IMR-90 (cell line): ENCODE measurements at regions of chr5 and their contacts with region 1.

Region 1: DNA sequence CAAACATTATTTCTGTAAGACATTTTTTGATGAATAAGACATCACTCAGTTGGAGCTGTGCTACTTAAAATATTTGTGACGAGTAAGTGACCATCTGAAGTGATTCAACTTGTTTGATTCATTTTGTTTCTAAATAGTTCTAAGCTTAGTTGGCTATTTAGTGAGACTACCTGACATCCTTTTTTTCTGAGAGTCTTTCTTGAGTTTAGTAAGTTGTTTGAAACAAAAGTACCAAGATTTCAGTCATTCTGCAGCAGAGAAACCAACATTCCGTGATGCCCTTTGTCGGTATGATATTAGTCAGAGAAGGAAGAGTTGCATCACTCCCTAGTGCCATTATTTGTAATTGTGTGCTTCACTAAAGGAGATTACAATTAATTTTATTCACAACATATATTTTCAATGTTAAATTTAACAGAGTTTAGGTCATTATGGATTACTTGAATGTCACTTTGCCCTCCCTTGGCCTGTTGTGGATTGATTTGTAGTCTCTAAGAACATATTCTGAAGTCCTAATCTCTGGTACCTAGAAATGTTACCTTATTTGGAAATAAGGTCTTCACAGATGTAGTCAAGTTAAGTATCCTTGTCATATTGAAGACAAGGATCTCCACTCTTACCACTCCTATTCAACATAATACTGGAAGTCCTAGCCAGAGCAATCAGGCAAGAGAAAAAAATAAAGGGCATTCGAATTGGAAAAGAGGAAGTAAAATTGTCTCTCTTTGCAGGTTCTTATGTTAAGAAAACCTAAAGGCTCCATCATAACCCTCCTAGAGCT is 212.2 kb downstream of the PCSK1 start:
- DNase-seq: peak; percentile 77
- ATAC-seq: peak; percentile 61
- H3K4me3 ChIP-seq: no peak overlapping the region
- H3K27ac ChIP-seq: peak overlapping the region; percentile 74
- H3K4me1 ChIP-seq: peaks cover 9% of the 10 kb centered on the region
- H3K27me3 ChIP-seq: no peaks in the 10 kb centered on the region
- CTCF ChIP-seq: no peak
- POLR2A ChIP-seq: no peak; the same call in 1 of the 2 replicates
- RAD21 ChIP-seq: no peak; the same call in 1 of the 2 replicates

Region 2: GRCh38 chr5:96113170-96113939 is 107.4 kb before region 1 on chr5:
- CTCF ChIA-PET with region 1: no interaction called
- POLR2A ChIA-PET with region 1: no interaction called
- dilution Hi-C with region 1: no loop called
- in situ Hi-C with region 1: no loop called
- intact Hi-C with region 1: loop called (anchors 5 kb)
- DNase-seq: no peak
- ATAC-seq: no peak
- H3K4me3 ChIP-seq: no peak overlapping the region
- H3K27ac ChIP-seq: no peak overlapping the region
- H3K4me1 ChIP-seq: peaks cover 12% of the 10 kb centered on the region
- H3K27me3 ChIP-seq: no peaks in the 10 kb centered on the region
- CTCF ChIP-seq: no peak
- POLR2A ChIP-seq: no peak
- RAD21 ChIP-seq: no peak

Region 3: GRCh38 chr5:96125231-96125891 is 95.4 kb before region 1 on chr5:
- CTCF ChIA-PET with region 1: no interaction called
- POLR2A ChIA-PET with region 1: no interaction called
- dilution Hi-C with region 1: no loop called
- in situ Hi-C with region 1: no loop called
- intact Hi-C with region 1: no loop called
- DNase-seq: no peak
- ATAC-seq: peak; percentile 49
- H3K4me3 ChIP-seq: no peak overlapping the region
- H3K27ac ChIP-seq: 0 out of 2 replicates have a peak overlapping the region, but pooled peaks have one; percentile 14
- H3K4me1 ChIP-seq: peaks cover 8% of the 10 kb centered on the region
- H3K27me3 ChIP-seq: no peaks in the 10 kb centered on the region
- CTCF ChIP-seq: no peak
- POLR2A ChIP-seq: no peak
- RAD21 ChIP-seq: no peak